ENCODE measurements at regions of chr17 and their contacts with region 1.

Region 1: GRCh38 chr17:60392042-60392844 is at the start of gene USP32:
- H3K4me3 Mint-ChIP-seq: peak within 1 kb of the TSS; percentile 94
- H3K27ac Mint-ChIP-seq: peak within 1 kb of the TSS; percentile 95
- H3K4me1 Mint-ChIP-seq: peaks cover 61% of the 10 kb centered on the region
- H3K27me3 Mint-ChIP-seq: no peaks in the 10 kb centered on the region

Region 2: DNA sequence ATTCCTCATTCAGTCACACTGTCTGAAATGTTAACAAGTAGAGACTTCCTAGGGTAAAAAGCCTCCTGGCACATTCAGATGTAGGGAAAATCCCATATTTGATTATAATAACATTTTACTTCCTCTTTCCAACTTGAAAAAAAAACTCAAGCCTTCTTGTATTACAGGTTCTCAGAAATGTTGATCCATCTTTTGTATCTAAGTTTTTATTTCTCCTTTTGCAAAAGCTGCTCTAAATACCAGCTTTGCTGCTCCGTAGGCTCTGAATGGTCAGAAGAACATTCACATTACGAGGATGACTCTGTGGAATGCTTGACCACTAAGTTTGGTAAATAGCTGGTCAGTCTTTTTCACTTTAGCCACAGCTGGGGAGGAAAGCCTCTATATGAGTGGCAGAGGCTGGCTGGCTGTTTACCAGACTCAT is 300.3 kb before region 1 on chr17:
- intact Hi-C with region 1: loop called (anchors 10 kb)
- H3K4me3 Mint-ChIP-seq: peak overlapping the region; percentile 34
- H3K27ac Mint-ChIP-seq: peak overlapping the region; percentile 90
- H3K4me1 Mint-ChIP-seq: peaks cover 60% of the 10 kb centered on the region
- H3K27me3 Mint-ChIP-seq: no peaks in the 10 kb centered on the region

Region 3: DNA sequence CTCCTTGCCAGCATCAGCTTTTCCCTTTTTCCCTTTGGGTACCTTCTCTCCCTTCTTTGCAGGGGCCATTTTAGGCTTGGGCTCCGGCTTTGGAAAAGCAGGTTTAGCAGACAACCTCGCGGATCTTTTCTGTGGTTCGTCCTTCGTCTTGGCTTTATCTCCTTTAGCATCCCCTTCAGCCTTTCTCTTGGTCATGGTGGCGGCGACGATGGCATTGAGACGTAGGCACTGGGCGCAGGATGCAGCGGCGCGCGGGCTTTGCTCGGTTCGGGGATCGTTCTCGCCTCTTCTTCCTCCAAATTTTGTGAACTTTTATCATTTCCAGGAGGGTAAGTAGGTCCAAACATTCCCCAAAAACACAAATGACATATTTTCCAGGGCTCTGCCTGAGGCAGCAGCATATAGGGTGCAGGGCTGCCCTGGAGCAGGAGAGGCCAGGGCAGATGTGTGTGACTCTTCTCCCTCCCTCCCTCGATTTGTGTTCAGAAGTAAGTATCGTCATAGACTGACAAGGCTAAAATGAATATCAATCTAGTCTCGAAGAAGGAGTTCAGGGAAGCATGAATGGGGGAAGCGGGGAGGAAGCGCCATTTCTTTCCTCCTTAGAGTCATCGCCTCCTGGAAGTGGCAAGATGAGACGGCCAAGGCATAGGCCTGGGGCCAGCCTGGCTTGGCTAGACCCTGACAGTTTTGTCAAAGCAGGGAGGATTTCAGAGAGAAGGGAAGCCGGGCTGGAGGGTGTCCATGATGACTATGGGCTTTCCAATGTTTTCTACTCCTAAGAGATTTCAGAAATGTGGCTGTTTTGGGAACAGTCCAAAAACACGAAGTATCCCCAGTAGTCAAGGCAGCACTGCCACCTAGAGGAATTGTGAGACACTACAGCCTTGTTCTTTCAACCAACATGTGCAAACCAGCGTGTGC is 43.3 kb after region 1 on chr17:
- intact Hi-C with region 1: loop called (anchors 5 kb)
- H3K4me3 Mint-ChIP-seq: no peak overlapping the region
- H3K27ac Mint-ChIP-seq: peak overlapping the region; percentile 32
- H3K4me1 Mint-ChIP-seq: peaks cover 26% of the 10 kb centered on the region
- H3K27me3 Mint-ChIP-seq: peaks cover 4% of the 10 kb centered on the region

Region 4: DNA sequence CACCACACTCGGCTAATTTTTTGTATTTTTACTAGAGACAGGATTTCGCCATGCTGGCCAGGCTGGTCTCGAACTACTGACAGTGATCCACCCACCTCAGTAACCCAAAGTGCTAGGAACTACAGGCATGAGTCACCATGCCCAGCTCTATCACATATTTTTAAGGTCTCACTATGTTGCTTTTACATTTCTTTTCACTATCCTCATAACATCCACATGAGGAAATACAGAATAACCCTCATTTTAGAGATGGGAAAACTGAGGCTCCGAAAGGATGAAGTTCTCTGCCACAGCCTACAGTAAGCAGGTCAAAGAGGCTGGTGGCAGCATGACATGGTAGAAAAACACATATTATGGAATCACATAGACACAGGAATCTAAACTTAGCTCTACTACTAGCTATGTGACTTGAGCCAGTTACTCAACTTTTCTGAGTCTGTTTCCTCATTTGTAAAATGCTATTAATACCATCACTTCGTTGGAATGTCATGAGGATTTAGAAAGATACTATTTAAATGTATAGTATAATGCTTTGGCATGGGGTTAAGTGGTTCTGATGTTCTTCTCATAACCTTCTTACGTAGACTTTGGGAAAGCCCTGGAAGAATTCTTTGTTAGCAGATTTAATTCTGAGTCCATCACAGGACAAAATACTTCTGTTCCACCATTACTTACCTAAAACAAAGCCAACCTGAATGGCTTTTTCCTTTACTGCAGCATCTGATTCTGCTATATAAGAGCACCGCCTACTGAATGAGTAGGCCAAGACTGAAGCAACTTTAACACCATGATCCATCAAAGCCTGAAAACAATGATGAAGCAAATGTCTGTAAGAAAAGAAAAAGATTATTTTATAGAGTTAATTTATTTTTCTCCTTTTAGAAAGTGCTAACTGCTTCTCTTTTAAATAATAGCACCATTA is 101.8 kb after region 1 on chr17:
- intact Hi-C with region 1: no loop called
- H3K4me3 Mint-ChIP-seq: no peak overlapping the region
- H3K27ac Mint-ChIP-seq: no peak overlapping the region
- H3K4me1 Mint-ChIP-seq: no peaks in the 10 kb centered on the region
- H3K27me3 Mint-ChIP-seq: no peaks in the 10 kb centered on the region